MCF 10A (cell line): ENCODE measurements at regions of chr3 and their contacts with region 1.

Region 1: DNA sequence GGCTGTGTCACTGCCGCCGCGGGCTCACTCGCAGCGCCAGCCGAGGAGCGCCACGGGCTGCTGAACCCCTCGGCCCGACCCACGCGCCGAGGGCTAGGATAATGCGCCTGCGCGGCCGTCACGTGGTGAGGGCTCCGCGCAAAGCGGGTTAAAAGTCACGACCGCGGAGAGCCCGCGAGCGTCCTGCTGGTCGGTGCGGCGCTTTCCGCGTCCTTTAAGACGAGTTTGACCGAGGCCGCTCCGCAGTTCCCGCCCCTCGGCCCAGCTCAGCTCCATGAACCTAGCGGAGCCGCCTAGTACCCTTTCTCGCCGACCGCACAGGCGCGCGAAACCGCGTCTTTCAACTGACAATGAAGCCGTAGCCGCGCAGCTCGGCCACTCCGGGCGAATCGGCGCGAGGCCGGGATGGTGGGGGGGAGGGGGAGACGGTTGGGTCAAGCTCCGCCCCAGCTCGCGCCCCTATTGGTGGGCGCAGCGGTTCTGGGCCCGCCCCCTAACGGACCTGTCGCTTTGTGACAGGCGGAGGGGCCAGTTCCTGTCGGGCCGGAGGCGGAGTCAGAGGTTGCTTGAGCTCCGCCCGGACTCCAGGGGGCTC is 636 bp upstream of the STT3B start:
- DNase-seq: peak; percentile 99
- H3K4me3 Mint-ChIP-seq: no peak overlapping the region
- H3K27ac Mint-ChIP-seq: peak overlapping the region; percentile 98
- H3K4me1 Mint-ChIP-seq: peaks cover 11% of the 10 kb centered on the region
- H3K27me3 Mint-ChIP-seq: no peaks in the 10 kb centered on the region
- CTCF ChIP-seq: no peak

Region 2: GRCh38 chr3:30768703-30769685 is 763.1 kb before region 1 on chr3:
- CTCF ChIA-PET with region 1: no interaction called
- POLR2A ChIA-PET with region 1: interaction called, 7 read pairs
- intact Hi-C with region 1: loop called (anchors 5 kb)
- DNase-seq: peak; percentile 67
- H3K4me3 Mint-ChIP-seq: no peak overlapping the region
- H3K27ac Mint-ChIP-seq: no peak overlapping the region
- H3K4me1 Mint-ChIP-seq: peaks cover 12% of the 10 kb centered on the region
- H3K27me3 Mint-ChIP-seq: no peaks in the 10 kb centered on the region
- CTCF ChIP-seq: peak; percentile 80

Region 3: DNA sequence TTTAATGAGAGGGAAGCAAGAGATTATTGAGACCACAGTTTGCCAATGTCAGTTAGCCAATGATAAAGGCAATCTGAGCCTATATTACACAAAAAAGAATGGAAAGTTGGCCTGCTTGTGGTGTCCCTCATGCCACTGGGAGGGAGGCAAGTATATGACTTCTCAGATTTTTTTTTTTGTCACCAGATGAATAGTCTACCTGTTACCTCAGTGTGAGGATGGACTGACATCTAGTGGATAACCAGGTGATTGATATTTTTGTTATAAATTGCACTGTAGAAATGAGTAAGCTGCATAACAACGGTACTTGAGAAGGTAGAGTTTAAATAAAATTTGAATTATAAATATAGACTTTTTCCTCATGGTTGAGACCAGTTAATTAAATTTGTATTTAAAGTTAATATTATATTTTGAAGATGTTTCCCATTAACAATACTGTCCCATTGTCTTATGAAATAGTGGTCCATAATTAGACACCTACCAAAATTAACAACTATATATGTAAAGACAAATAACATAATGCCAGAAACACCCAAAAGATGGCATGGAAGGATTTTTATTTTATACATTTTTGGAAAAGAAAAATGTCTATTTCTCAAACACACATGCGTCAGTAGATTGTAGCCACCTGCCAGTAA is 399.8 kb before region 1 on chr3:
- CTCF ChIA-PET with region 1: interaction called, 4 read pairs
- POLR2A ChIA-PET with region 1: interaction called, 7 read pairs
- intact Hi-C with region 1: loop called (anchors 10 kb)
- DNase-seq: peak; percentile 65
- H3K4me3 Mint-ChIP-seq: no peak overlapping the region
- H3K27ac Mint-ChIP-seq: no peak overlapping the region
- H3K4me1 Mint-ChIP-seq: no peaks in the 10 kb centered on the region
- H3K27me3 Mint-ChIP-seq: no peaks in the 10 kb centered on the region
- CTCF ChIP-seq: peak; percentile 77

Region 4: DNA sequence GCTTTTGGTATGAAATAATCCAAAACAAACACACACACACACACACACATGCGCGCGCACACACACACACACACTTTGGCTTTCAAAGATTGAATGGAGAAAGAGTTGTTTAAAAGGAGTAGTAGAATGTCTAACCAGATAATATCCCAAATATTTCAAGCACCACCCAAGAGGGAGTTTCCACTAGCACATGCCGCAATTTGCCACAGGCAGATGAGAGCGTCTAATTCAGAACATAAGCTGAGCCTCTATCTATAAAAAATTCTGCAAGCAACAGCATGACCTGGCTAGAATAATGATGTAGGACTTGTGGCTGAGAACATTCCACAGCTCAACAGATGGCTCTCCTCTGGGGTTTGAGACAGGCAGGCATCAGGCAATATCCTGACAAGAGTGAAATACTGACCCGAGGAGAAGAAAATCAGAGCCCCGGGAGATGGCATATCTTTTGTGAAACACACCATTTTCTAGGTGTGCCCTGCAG is 335.2 kb before region 1 on chr3:
- CTCF ChIA-PET with region 1: no interaction called
- POLR2A ChIA-PET with region 1: interaction called, 18 read pairs
- intact Hi-C with region 1: no loop called
- DNase-seq: peak; percentile 9
- H3K4me3 Mint-ChIP-seq: no peak overlapping the region
- H3K27ac Mint-ChIP-seq: no peak overlapping the region
- H3K4me1 Mint-ChIP-seq: no peaks in the 10 kb centered on the region
- H3K27me3 Mint-ChIP-seq: no peaks in the 10 kb centered on the region
- CTCF ChIP-seq: no peak

Region 5: DNA sequence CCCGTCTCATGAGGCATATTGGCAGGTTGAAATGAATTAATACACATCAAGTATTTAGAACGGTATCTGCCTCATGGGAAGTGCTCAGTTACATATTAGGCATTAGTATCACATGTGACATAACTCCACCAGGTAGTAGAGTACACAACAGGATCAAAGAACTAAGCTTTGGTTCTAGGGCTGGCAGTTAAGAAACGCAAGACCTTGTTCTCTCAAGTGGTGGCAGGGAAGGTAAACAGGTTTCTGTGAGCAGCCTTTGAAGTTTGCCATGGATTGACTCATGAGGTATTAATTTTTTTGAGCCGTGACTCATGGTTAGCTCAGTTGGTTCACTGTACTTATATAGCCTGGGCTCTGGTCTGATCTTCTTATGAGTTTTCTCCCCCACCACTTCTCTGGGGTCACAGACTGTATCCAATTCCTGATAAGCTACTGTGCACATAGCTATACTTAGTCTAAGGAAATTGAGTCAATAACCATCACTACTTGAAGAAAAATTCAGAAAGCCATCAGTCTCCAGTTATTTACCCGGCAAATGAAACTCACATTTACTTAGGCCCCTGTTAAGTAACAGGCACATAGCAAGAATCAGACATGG is 154.9 kb before region 1 on chr3:
- CTCF ChIA-PET with region 1: no interaction called
- POLR2A ChIA-PET with region 1: interaction called, 14 read pairs
- intact Hi-C with region 1: no loop called
- DNase-seq: peak; percentile 85
- H3K4me3 Mint-ChIP-seq: no peak overlapping the region
- H3K27ac Mint-ChIP-seq: no peak overlapping the region
- H3K4me1 Mint-ChIP-seq: peaks cover 7% of the 10 kb centered on the region
- H3K27me3 Mint-ChIP-seq: no peaks in the 10 kb centered on the region
- CTCF ChIP-seq: no peak

Region 6: GRCh38 chr3:31544634-31545033 is 12.5 kb after region 1 on chr3:
- CTCF ChIA-PET with region 1: interaction called, 7 read pairs
- POLR2A ChIA-PET with region 1: interaction called, 107 read pairs
- intact Hi-C with region 1: no loop called
- DNase-seq: peak; percentile 51
- H3K4me3 Mint-ChIP-seq: no peak overlapping the region
- H3K27ac Mint-ChIP-seq: no peak overlapping the region
- H3K4me1 Mint-ChIP-seq: peaks cover 30% of the 10 kb centered on the region
- H3K27me3 Mint-ChIP-seq: no peaks in the 10 kb centered on the region
- CTCF ChIP-seq: no peak

Region 7: GRCh38 chr3:31981206-31982181 is 449.4 kb after region 1 on chr3 and contains the starts of genes OSBPL10 and ZNF860:
- CTCF ChIA-PET with region 1: no interaction called
- POLR2A ChIA-PET with region 1: interaction called, 18 read pairs
- intact Hi-C with region 1: loop called (anchors 10 kb)
- DNase-seq: peak; percentile 95
- H3K4me3 Mint-ChIP-seq: peak within 1 kb of the TSS; percentile 93
- H3K27ac Mint-ChIP-seq: peak within 1 kb of the TSS; percentile 91
- H3K4me1 Mint-ChIP-seq: peaks cover 46% of the 10 kb centered on the region
- H3K27me3 Mint-ChIP-seq: no peaks in the 10 kb centered on the region
- CTCF ChIP-seq: no peak
- total RNA-seq, gene OSBPL10: 128 and 172 TPM in 2 replicates
- total RNA-seq, gene ZNF860: 11.7 and 12.5 TPM in 2 replicates